ENCODE measurements at regions of chr3 and their contacts with region 1.

Region 1: GRCh38 chr3:88203642-88204055 is 53.9 kb downstream of the C3orf38 start:
- DNase-seq: peak; percentile 57
- ATAC-seq: peak; percentile 85

Region 2: DNA sequence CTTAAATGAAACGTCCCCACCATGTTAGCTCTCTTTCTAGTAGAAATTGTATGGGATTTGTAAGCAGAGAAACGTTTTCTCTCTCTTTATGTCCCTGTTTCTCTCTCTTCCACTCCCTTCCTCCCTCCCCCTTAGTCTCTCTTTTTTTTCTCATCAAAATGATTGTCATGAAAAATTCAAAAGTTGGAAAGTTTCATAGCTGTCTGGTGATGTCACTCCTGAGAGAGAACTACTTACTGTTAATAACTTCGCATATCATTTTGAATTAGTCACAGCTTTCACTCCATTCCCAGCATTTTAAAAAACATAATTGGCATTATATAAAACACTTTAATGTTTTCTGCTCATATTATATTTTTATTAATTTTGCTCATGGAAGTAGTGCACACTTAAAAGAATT is 277.2 kb after region 1 on chr3:
- intact Hi-C with region 1: no loop called
- DNase-seq: no peak
- ATAC-seq: no peak

Region 3: DNA sequence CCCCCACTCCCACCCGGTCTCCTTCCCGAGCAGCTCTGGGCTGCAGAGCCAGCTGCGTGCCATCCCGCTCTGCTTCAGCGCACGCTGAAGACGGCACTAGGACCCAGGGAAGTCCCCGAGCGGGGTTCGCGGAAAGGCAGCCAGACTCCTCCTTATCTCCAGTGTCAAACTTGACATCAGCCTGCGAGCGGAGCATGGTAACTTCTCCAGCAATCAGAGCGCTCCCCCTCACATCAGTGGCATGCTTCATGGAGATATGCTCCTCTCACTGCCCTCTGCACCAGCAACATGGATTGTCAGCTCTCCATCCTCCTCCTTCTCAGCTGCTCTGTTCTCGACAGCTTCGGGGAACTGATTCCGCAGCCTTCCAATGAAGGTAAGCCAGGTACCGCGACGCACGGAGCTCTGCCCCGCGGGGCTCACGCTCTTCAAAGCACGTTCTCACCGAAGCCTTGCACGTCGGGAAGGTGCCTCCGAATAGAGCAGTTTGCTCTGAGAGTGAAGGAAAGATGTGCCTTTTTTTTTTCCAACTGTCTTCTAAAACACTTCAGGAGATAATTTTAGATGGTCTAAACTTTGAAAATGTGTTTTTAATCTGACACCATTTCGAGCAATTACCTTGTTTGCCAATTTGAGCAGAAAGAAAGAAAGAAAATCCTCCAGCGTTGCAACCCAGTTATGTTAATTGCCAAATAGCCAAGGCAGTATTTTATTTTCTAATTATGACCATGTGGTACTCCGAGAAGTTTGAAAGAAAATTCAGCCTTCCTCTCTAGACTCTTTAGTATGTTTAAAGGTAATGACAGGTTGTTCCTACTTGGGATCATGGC is 904.0 kb after region 1 on chr3 and contains the start of gene EPHA3:
- intact Hi-C with region 1: loop called (anchors 10 kb)
- DNase-seq: peak; percentile 75
- ATAC-seq: peak; percentile 96
- total RNA-seq, gene EPHA3: 1.9 TPM

Measured in left ventricle myocardium superior (tissue), 1 donor.